ENCODE measurements at regions of chr4 and their contacts with region 1.

Region 1: DNA sequence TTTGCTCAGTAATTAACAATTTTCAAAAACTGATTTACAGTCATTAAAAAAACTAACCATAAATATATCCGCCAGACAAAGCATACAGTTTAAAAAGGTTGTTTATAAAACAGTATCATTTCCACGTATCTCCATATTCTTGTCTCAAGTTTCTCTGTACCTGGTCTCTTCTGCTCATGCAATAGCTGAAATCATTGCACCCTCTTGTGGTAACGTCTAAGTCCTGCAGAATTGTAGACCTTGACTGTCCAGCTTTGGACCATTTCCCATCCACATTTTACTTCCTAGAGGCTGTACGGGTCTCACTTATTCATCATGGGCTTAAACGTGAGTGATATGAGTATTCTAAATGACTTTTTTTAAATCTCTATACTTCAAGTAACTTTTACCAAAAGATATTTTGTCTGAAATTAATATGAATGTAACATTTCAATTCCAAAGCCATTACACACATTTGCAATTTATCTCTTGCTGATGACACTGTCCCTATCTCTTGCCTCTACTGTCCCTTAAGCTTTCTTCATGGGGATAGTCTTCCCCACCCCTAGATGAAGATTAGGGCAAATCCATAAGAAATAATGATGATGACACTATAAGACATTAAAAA is 118.5 kb downstream of the BTC start:
- DNase-seq: no peak
- H3K4me3 ChIP-seq: no peak overlapping the region
- H3K27ac ChIP-seq: no peak overlapping the region
- H3K4me1 ChIP-seq: no peaks in the 10 kb centered on the region
- H3K27me3 ChIP-seq: no peaks in the 10 kb centered on the region
- CTCF ChIP-seq: peak; percentile 57 to 61

Region 2: GRCh38 chr4:74370912-74371311 is 304.9 kb before region 1 on chr4:
- intact Hi-C with region 1: loop called (anchors 10 kb)
- DNase-seq: no peak
- H3K4me3 ChIP-seq: no peak overlapping the region
- H3K27ac ChIP-seq: no peak overlapping the region
- H3K4me1 ChIP-seq: peaks cover 0 to 3% (median 0%) of the 10 kb centered on the region in 4 donors
- H3K27me3 ChIP-seq: no peaks in the 10 kb centered on the region
- CTCF ChIP-seq: peak; percentile 20 to 28